GM12878 (cell line): ENCODE measurements at regions of chr4 and their contacts with region 1.

Region 1: GRCh38 chr4:79042079-79042674 is 102.9 kb upstream of the PAQR3 start:
- DNase-seq: no peak
- ATAC-seq: peak; percentile 67
- H3K4me3 ChIP-seq: no peak overlapping the region
- H3K27ac ChIP-seq: no peak overlapping the region
- H3K4me1 ChIP-seq: no peaks in the 10 kb centered on the region
- H3K27me3 ChIP-seq: no peaks in the 10 kb centered on the region
- CTCF ChIP-seq: peak; percentile 38 to 62 (median 43); a peak in 4 of 6 replicates
- EP300 ChIP-seq: no peak
- POLR2A ChIP-seq: no peak
- RAD21 ChIP-seq: peak; percentile 84

Region 2: DNA sequence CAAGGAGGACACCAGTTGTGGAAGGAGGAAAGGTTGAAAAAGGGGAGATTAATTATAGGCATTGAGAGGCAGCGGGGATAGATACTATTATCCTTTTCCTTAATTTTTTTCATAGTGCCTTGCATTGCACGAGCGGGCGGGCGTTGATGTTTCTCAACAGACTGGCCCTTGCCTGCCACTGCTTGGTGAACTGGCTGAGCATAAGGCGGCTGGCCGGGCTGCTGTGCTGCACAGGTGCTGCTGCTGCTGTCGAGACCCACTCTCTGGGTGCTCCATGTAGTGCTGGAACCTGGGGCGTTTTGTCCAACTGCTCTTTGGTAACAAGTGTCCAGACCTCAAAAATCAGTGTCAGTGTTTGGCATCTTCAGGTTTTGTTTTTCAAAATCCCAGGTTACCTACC is 19.6 kb before region 1 on chr4:
- CTCF ChIA-PET with region 1: no interaction called
- POLR2A ChIA-PET with region 1: no interaction called
- RAD21 ChIA-PET with region 1: no interaction called
- SMC1A ChIA-PET with region 1: no interaction called
- in situ Hi-C with region 1: no loop called
- intact Hi-C with region 1: no loop called
- DNase-seq: no peak
- ATAC-seq: no peak
- H3K4me3 ChIP-seq: no peak overlapping the region
- H3K27ac ChIP-seq: no peak overlapping the region
- H3K4me1 ChIP-seq: no peaks in the 10 kb centered on the region
- H3K27me3 ChIP-seq: no peaks in the 10 kb centered on the region; a peak in 1 of 4 replicates
- CTCF ChIP-seq: no peak
- EP300 ChIP-seq: no peak
- POLR2A ChIP-seq: no peak
- RAD21 ChIP-seq: no peak

Region 3: DNA sequence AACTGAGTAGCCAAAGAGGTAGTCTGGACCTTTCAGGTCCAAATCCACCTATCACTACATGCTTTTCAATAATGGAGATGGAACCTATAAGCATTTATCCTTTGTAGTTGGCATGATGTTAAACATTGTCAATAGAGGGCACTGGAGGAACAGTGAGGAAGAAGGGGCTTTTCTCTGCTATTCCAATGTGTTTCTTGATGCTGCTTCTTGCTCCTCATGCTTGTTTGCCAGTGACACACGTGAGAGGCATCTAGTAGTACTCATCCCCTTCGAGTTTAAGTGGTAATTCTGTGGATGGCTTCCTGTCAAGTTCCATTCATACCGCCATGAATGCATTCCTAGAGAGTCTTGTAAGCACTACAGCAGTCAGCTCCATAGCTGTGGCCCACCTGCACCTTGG is 199.7 kb after region 1 on chr4:
- CTCF ChIA-PET with region 1: interaction called, 30 read pairs
- POLR2A ChIA-PET with region 1: no interaction called
- RAD21 ChIA-PET with region 1: interaction called, 47 read pairs
- SMC1A ChIA-PET with region 1: interaction called, 39 read pairs
- in situ Hi-C with region 1: no loop called
- intact Hi-C with region 1: loop called (anchors 2 kb)
- DNase-seq: no peak
- ATAC-seq: peak; percentile 61
- H3K4me3 ChIP-seq: no peak overlapping the region
- H3K27ac ChIP-seq: no peak overlapping the region
- H3K4me1 ChIP-seq: no peaks in the 10 kb centered on the region
- H3K27me3 ChIP-seq: no peaks in the 10 kb centered on the region
- CTCF ChIP-seq: peak in 2 of 3 experiments; percentile 10 to 38; a peak in 2 of 6 replicates
- EP300 ChIP-seq: no peak
- POLR2A ChIP-seq: no peak
- RAD21 ChIP-seq: peak; percentile 47

Region 4: GRCh38 chr4:79249881-79250503 is 207.8 kb after region 1 on chr4:
- CTCF ChIA-PET with region 1: interaction called, 30 read pairs
- POLR2A ChIA-PET with region 1: no interaction called
- RAD21 ChIA-PET with region 1: interaction called, 47 read pairs
- SMC1A ChIA-PET with region 1: interaction called, 39 read pairs
- in situ Hi-C with region 1: no loop called
- intact Hi-C with region 1: no loop called
- DNase-seq: no peak
- ATAC-seq: peak; percentile 84
- H3K4me3 ChIP-seq: no peak overlapping the region
- H3K27ac ChIP-seq: no peak overlapping the region
- H3K4me1 ChIP-seq: no peaks in the 10 kb centered on the region
- H3K27me3 ChIP-seq: no peaks in the 10 kb centered on the region; a peak in 2 of 4 replicates
- CTCF ChIP-seq: no peak
- EP300 ChIP-seq: no peak
- POLR2A ChIP-seq: no peak
- RAD21 ChIP-seq: no peak

Region 5: DNA sequence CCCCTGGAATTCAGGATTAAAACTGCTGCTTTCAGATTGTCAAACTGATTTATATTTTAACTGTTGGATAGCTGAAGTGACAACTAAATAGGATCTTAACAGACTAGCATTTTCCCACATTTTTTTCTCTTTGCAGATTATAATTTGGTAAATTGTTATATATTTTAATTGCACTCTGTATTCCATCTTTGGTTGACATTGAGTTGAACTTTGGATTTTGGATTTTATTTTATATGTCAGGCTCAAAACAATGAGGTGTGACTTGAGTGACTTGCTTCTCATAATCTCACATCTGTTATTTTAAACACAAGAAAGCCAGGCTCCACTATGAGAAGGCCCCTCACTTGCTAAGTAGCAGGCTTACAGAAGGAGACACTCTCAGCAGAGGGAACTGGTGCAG is 245.5 kb after region 1 on chr4:
- CTCF ChIA-PET with region 1: no interaction called
- POLR2A ChIA-PET with region 1: no interaction called
- RAD21 ChIA-PET with region 1: no interaction called
- SMC1A ChIA-PET with region 1: interaction called, 10 read pairs
- in situ Hi-C with region 1: no loop called
- intact Hi-C with region 1: no loop called
- DNase-seq: no peak
- ATAC-seq: no peak
- H3K4me3 ChIP-seq: no peak overlapping the region
- H3K27ac ChIP-seq: no peak overlapping the region
- H3K4me1 ChIP-seq: no peaks in the 10 kb centered on the region
- H3K27me3 ChIP-seq: no peaks in the 10 kb centered on the region
- CTCF ChIP-seq: no peak
- EP300 ChIP-seq: no peak
- POLR2A ChIP-seq: no peak
- RAD21 ChIP-seq: no peak

Region 6: GRCh38 chr4:79294064-79294463 is 251.9 kb after region 1 on chr4:
- CTCF ChIA-PET with region 1: interaction called, 19 read pairs
- POLR2A ChIA-PET with region 1: no interaction called
- RAD21 ChIA-PET with region 1: interaction called, 7 read pairs
- SMC1A ChIA-PET with region 1: interaction called, 8 read pairs
- in situ Hi-C with region 1: no loop called
- intact Hi-C with region 1: loop called (anchors 2 kb)
- DNase-seq: no peak
- ATAC-seq: peak; percentile 47
- H3K4me3 ChIP-seq: no peak overlapping the region
- H3K27ac ChIP-seq: no peak overlapping the region
- H3K4me1 ChIP-seq: no peaks in the 10 kb centered on the region
- H3K27me3 ChIP-seq: no peaks in the 10 kb centered on the region
- CTCF ChIP-seq: no peak
- EP300 ChIP-seq: no peak
- POLR2A ChIP-seq: no peak
- RAD21 ChIP-seq: no peak

Region 7: DNA sequence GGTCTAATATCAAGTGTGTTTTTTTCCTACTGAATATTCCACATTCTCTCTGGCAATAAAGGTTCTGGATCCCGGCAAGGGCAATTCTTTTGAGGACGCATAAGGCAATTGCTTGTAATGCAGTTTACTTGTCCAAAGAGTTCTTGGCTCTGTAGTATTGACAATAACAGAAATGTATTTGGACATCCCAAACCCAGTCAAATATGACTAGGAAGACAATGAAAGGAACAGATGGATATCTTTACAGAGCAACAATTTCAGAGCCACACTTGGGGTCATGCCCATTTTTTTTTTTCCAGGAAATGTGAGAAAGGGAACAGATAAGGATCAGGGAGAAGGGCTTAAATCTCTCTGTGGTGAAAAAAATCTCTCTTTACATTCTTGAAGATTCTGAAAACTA is 353.7 kb after region 1 on chr4:
- CTCF ChIA-PET with region 1: interaction called, 18 read pairs
- POLR2A ChIA-PET with region 1: no interaction called
- RAD21 ChIA-PET with region 1: interaction called, 18 read pairs
- SMC1A ChIA-PET with region 1: interaction called, 10 read pairs
- in situ Hi-C with region 1: no loop called
- intact Hi-C with region 1: no loop called
- DNase-seq: no peak
- ATAC-seq: no peak
- H3K4me3 ChIP-seq: no peak overlapping the region
- H3K27ac ChIP-seq: no peak overlapping the region
- H3K4me1 ChIP-seq: no peaks in the 10 kb centered on the region
- H3K27me3 ChIP-seq: no peaks in the 10 kb centered on the region
- CTCF ChIP-seq: no peak
- EP300 ChIP-seq: no peak
- POLR2A ChIP-seq: no peak
- RAD21 ChIP-seq: no peak

Region 8: GRCh38 chr4:79576429-79576753 is 534.2 kb after region 1 on chr4:
- CTCF ChIA-PET with region 1: interaction called, 48 read pairs
- POLR2A ChIA-PET with region 1: no interaction called
- RAD21 ChIA-PET with region 1: interaction called, 22 read pairs
- SMC1A ChIA-PET with region 1: interaction called, 23 read pairs
- in situ Hi-C with region 1: no loop called
- intact Hi-C with region 1: loop called (anchors 1 kb)
- DNase-seq: no peak
- ATAC-seq: peak; percentile 88
- H3K4me3 ChIP-seq: no peak overlapping the region
- H3K27ac ChIP-seq: no peak overlapping the region
- H3K4me1 ChIP-seq: no peaks in the 10 kb centered on the region
- H3K27me3 ChIP-seq: no peaks in the 10 kb centered on the region
- CTCF ChIP-seq: peak; percentile 37 to 50 (median 49); a peak in 4 of 6 replicates
- EP300 ChIP-seq: no peak
- POLR2A ChIP-seq: no peak
- RAD21 ChIP-seq: peak; percentile 70